Ascending aorta (tissue), 2 donors: ENCODE measurements at regions of chr11 and their contacts with region 1.

Region 1: GRCh38 chr11:67583247-67584204 is at the start of gene GSTP1:
- DNase-seq: peak; percentile 58 to 96
- H3K4me3 ChIP-seq: peak within 1 kb of the TSS; percentile 90 to 98
- H3K27ac ChIP-seq: peak within 1 kb of the TSS; percentile 100
- H3K4me1 ChIP-seq: peaks cover 11 to 17% of the 10 kb centered on the region in 2 donors
- H3K27me3 ChIP-seq: no peaks in the 10 kb centered on the region
- CTCF ChIP-seq: peak; percentile 55 to 95 (median 83)
- total RNA-seq, gene GSTP1: 1,335 TPM

Region 2: GRCh38 chr11:67195971-67196456 is 387.5 kb before region 1 on chr11:
- intact Hi-C with region 1: no loop called
- DNase-seq: no peak
- H3K4me3 ChIP-seq: no peak overlapping the region
- H3K27ac ChIP-seq: no peak overlapping the region
- H3K4me1 ChIP-seq: no peaks in the 10 kb centered on the region
- H3K27me3 ChIP-seq: no peaks in the 10 kb centered on the region
- CTCF ChIP-seq: no peak

Region 3: DNA sequence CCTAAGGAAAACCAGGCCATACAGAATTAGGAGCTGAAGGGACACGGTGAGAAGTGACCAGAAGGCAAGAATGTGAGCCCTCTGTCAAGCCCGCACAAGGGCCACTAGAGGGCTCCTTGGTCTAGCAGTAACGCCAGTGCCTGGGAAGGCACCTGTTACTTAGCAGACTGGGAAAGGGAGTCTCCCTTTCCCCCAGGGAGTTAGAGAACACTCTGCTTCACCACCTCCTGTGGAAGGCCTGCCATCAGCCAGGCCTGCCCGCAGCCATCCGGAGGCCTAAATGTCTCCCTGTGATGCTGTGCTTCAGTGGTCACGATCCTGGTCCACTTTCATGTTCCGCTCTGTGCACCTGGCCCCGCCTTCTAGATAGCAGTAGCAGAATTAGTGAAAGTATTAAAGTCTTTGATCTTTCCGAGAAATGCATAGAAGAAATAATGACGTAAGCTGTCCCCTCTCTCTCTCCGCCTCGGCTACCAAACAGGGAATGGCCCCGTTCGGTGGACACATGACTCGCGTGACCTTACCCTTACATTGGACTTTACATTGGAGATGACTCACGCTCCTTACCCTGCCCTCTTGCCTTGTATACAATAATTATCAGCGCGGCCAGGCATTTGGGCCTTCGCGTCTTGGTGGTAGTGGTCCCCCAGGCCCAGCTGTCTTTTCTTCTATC is 10.6 kb before region 1 on chr11:
- intact Hi-C with region 1: loop called (anchors 1 kb)
- DNase-seq: no peak
- H3K4me3 ChIP-seq: no peak overlapping the region
- H3K27ac ChIP-seq: no peak overlapping the region
- H3K4me1 ChIP-seq: no peaks in the 10 kb centered on the region
- H3K27me3 ChIP-seq: no peaks in the 10 kb centered on the region
- CTCF ChIP-seq: peak; percentile 61 to 84 (median 79)

Region 4: DNA sequence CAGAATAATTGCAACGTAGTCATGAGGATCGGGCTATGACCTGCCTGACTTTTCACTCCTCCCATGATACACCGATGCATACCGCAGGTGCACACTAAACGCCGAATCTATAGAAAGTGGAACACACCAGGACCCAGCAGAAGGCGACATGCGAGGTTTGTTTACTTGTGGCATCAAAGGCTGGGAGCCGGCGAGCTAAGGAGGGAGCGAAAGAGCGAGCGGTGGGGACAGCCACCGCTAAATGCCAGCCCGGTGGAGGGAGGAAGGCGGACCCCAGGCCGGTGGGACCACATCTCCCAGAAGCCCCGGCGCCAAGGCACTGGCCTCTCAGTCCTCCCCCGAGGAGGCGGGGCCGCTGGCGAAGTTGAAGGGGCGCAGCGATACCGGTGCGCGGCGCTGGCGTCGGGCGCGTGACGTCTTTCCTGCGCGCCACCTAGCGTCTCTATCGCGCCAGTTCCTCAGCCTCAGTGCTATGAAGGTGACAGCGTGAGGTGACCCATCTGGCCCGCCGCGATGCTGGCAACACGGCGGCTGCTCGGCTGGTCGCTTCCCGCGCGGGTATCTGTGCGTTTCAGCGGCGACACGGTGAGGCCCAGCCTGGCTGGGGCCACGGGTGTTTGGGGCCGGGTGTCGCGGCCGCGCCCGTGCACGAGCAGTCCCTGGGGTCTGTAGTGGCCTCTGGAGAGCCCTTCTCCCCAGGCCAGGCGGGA is 23.1 kb after region 1 on chr11 and contains the start of gene NDUFV1:
- intact Hi-C with region 1: loop called (anchors 1 kb)
- DNase-seq: peak; percentile 86 to 99
- H3K4me3 ChIP-seq: peak within 1 kb of the TSS; percentile 96 to 99
- H3K27ac ChIP-seq: peak within 1 kb of the TSS; percentile 66 to 78
- H3K4me1 ChIP-seq: peaks cover 7 to 22% of the 10 kb centered on the region in 2 donors
- H3K27me3 ChIP-seq: no peaks in the 10 kb centered on the region
- CTCF ChIP-seq: peak; percentile 66 to 83 (median 68)
- total RNA-seq, gene NDUFV1: 128 TPM

Region 5: GRCh38 chr11:67630228-67630942 is 46.9 kb after region 1 on chr11:
- intact Hi-C with region 1: loop called (anchors 2 kb)
- DNase-seq: peak; percentile 90 to 99
- H3K4me3 ChIP-seq: peak overlapping the region; percentile 65 to 80
- H3K27ac ChIP-seq: peak overlapping the region; percentile 81 to 92
- H3K4me1 ChIP-seq: peaks cover 4 to 6% of the 10 kb centered on the region in 2 donors
- H3K27me3 ChIP-seq: no peaks in the 10 kb centered on the region
- CTCF ChIP-seq: peak; percentile 78 to 83 (median 79)

Region 6: DNA sequence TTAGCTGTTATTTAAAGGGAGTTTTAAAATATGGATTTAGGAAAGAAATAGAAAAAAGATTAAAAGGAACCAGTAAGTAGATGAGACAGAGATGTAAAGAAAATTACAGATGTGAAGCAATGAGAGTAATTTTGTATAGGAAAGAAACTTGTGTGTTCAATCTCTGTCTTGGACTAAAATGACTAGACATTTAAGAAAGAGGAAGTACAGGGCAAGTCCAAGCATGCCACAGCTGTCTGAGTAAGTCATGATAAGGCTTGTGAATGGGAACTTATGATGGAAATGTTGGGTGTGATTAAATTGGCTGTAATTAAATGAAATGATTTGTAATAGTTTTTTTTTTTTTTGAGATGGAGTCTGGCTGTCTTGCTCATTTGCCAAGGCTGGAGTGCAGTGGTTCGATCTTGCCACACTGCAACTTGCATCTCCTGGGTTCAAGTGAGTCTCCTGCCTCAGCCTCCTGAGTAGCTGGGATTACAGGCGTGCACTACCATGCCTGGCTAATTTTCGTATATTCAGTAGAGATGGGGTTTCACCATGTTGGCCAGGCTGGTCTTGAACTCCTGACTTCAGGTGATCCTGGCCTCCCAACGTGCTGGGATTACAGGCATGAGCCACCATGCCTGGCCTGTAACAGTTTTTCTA is 72.9 kb after region 1 on chr11:
- intact Hi-C with region 1: loop called (anchors 5 kb)
- DNase-seq: no peak
- H3K4me3 ChIP-seq: no peak overlapping the region
- H3K27ac ChIP-seq: peak overlapping the region in 1 of 2 donors; percentile 72
- H3K4me1 ChIP-seq: peaks cover 0 to 9% of the 10 kb centered on the region in 2 donors
- H3K27me3 ChIP-seq: no peaks in the 10 kb centered on the region
- CTCF ChIP-seq: no peak